Tibial artery (tissue), 4 donors: ENCODE measurements at regions of chr20 and their contacts with region 1.

Region 1: GRCh38 chr20:62793912-62794724 is 2.2 kb upstream of the MRGBP start:
- DNase-seq: peak; percentile 95 to 98
- H3K4me3 ChIP-seq: peak overlapping the region; percentile 72 to 90
- H3K27ac ChIP-seq: peak overlapping the region; percentile 93 to 94
- H3K4me1 ChIP-seq: peaks cover 9 to 32% (median 16%) of the 10 kb centered on the region in 4 donors
- H3K27me3 ChIP-seq: peaks cover 0 to 3% of the 10 kb centered on the region in 2 donors
- CTCF ChIP-seq: no peak

Region 2: GRCh38 chr20:62409931-62410745 is 384.0 kb before region 1 on chr20:
- intact Hi-C with region 1: loop called (anchors 5 kb)
- DNase-seq: no peak
- H3K4me3 ChIP-seq: no peak overlapping the region
- H3K27ac ChIP-seq: no peak overlapping the region
- H3K4me1 ChIP-seq: peaks cover 0 to 55% (median 27%) of the 10 kb centered on the region in 4 donors
- H3K27me3 ChIP-seq: peaks cover 0 to 42% of the 10 kb centered on the region in 2 donors
- CTCF ChIP-seq: no peak

Region 3: GRCh38 chr20:62500237-62500864 is 293.8 kb before region 1 on chr20:
- intact Hi-C with region 1: loop called (anchors 2 kb)
- DNase-seq: peak; percentile 71 to 82
- H3K4me3 ChIP-seq: no peak overlapping the region
- H3K27ac ChIP-seq: no peak overlapping the region
- H3K4me1 ChIP-seq: peaks cover 0 to 14% (median 0%) of the 10 kb centered on the region in 4 donors
- H3K27me3 ChIP-seq: peaks cover 0 to 49% of the 10 kb centered on the region in 2 donors
- CTCF ChIP-seq: peak; percentile 86 to 92

Region 4: GRCh38 chr20:62652051-62652926 is 141.8 kb before region 1 on chr20:
- intact Hi-C with region 1: loop called (anchors 5 kb)
- DNase-seq: peak; percentile 97 to 98
- H3K4me3 ChIP-seq: peak overlapping the region; percentile 39 to 40
- H3K27ac ChIP-seq: peak overlapping the region; percentile 80 to 89
- H3K4me1 ChIP-seq: peaks cover 0 to 30% (median 14%) of the 10 kb centered on the region in 4 donors
- H3K27me3 ChIP-seq: peaks cover 0 to 7% of the 10 kb centered on the region in 2 donors
- CTCF ChIP-seq: no peak